ENCODE measurements at regions of chr6 and their contacts with region 1.

Region 1: DNA sequence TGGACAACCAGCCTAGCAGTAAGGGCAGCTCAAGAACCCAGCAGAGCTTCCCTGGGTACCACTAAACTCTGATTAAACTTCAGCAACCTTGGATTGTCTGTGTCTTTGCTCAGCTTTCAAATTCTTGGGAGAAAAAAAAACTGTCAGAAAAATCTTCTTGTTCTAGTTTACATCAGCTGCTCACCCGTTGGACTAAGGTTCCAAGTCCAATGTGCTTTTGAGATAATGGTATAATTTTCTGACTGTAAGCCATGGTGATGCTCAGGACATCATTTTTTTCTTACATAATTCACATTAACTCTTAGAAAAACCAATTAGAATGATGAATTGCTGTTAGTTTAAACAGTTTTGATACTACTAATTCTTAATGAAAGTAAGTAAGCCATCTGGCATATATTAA is 145.8 kb downstream of the COL9A1 start:
- DNase-seq: no peak
- H3K4me3 ChIP-seq: no peak overlapping the region
- H3K4me3 Mint-ChIP-seq: no peak overlapping the region
- H3K27ac Mint-ChIP-seq: no peak overlapping the region
- H3K4me1 ChIP-seq: no peaks in the 10 kb centered on the region
- H3K4me1 Mint-ChIP-seq: no peaks in the 10 kb centered on the region
- H3K27me3 ChIP-seq: no peaks in the 10 kb centered on the region
- H3K27me3 Mint-ChIP-seq: peaks cover 5% of the 10 kb centered on the region
- CTCF ChIP-seq: no peak

Region 2: DNA sequence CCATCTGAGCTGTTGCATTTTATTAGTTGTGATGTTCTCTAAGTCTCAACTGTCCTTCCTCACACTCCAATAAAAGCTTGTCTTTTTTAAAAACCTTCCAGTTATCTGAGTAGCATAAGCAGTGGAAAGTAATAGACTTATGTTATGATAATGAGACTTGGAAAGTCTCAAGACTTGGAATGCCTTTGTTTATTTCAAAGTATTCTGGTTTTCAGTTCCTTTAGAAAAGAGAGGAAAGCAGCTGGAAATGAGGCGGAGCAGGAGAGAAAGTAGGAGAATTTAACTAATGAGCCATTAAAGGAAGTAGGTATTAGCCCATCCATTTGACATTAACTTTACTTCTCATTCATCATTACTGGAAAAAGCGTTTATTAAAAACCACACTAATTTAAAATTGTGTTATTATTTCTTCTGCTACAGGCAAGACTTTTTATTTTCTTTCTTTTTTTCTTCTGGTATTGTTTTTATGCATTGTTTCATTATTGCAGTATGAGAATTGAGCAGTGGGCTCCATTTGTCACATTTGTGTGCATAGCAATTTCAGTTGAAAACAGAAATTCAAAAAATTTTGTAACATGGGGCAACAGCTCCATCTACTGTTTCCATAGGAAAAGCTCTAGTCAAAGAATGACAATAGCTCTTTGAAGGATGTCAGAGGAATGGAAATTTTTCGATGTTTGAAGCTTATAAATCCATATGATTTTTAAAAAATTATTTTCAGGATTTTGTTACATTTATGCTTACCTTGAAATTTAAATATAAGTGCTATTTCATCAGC is 49.0 kb before region 1 on chr6:
- CTCF ChIA-PET with region 1: no interaction called
- POLR2A ChIA-PET with region 1: no interaction called
- intact Hi-C with region 1: no loop called
- DNase-seq: peak in 1 of 2 experiments; percentile 37
- H3K4me3 ChIP-seq: no peak overlapping the region
- H3K4me3 Mint-ChIP-seq: no peak overlapping the region
- H3K27ac Mint-ChIP-seq: no peak overlapping the region
- H3K4me1 ChIP-seq: no peaks in the 10 kb centered on the region
- H3K4me1 Mint-ChIP-seq: no peaks in the 10 kb centered on the region
- H3K27me3 ChIP-seq: no peaks in the 10 kb centered on the region
- H3K27me3 Mint-ChIP-seq: peaks cover 12% of the 10 kb centered on the region
- CTCF ChIP-seq: peak; percentile 68

Region 3: GRCh38 chr6:70133246-70133645 is 23.8 kb before region 1 on chr6:
- CTCF ChIA-PET with region 1: no interaction called
- POLR2A ChIA-PET with region 1: no interaction called
- intact Hi-C with region 1: loop called (anchors 1 kb)
- DNase-seq: no peak
- H3K4me3 ChIP-seq: no peak overlapping the region
- H3K4me3 Mint-ChIP-seq: no peak overlapping the region
- H3K27ac Mint-ChIP-seq: no peak overlapping the region
- H3K4me1 ChIP-seq: no peaks in the 10 kb centered on the region
- H3K4me1 Mint-ChIP-seq: no peaks in the 10 kb centered on the region
- H3K27me3 ChIP-seq: no peaks in the 10 kb centered on the region
- H3K27me3 Mint-ChIP-seq: peaks cover 7% of the 10 kb centered on the region
- CTCF ChIP-seq: no peak

Measured in Caco-2 (cell line).